CD4-positive, alpha-beta T cell (primary cell): ENCODE measurements at regions of chr16 and their contacts with region 1.

Region 1: GRCh38 chr16:30519120-30520049 is 7.0 kb downstream of the ZNF768 start:
- DNase-seq: no peak
- ATAC-seq: no peak
- H3K4me3 ChIP-seq: no peak overlapping the region
- H3K4me3 Mint-ChIP-seq: no peak overlapping the region
- H3K27ac ChIP-seq: peak overlapping the region in 1 of 2 donors; percentile 13
- H3K27ac Mint-ChIP-seq: peak overlapping the region; percentile 63
- H3K4me1 ChIP-seq: peaks cover 6% of the 10 kb centered on the region
- H3K4me1 Mint-ChIP-seq: no peaks in the 10 kb centered on the region
- H3K27me3 ChIP-seq: no peaks in the 10 kb centered on the region
- H3K27me3 Mint-ChIP-seq: no peaks in the 10 kb centered on the region
- CTCF ChIP-seq: no peak

Region 2: GRCh38 chr16:30499284-30499683 is 20.1 kb before region 1 on chr16:
- CTCF ChIA-PET with region 1: interaction called, 3 read pairs
- POLR2A ChIA-PET with region 1: no interaction called
- intact Hi-C with region 1: loop called in 1 of 2 experiments (anchors 2 kb)
- DNase-seq: no peak
- ATAC-seq: no peak
- H3K4me3 ChIP-seq: no peak overlapping the region
- H3K4me3 Mint-ChIP-seq: no peak overlapping the region
- H3K27ac ChIP-seq: no peak overlapping the region
- H3K27ac Mint-ChIP-seq: no peak overlapping the region
- H3K4me1 ChIP-seq: peaks cover 10% of the 10 kb centered on the region
- H3K4me1 Mint-ChIP-seq: peaks cover 9% of the 10 kb centered on the region
- H3K27me3 ChIP-seq: no peaks in the 10 kb centered on the region
- H3K27me3 Mint-ChIP-seq: no peaks in the 10 kb centered on the region
- CTCF ChIP-seq: no peak